ENCODE measurements at regions of chr19 and their contacts with region 1.

Region 1: DNA sequence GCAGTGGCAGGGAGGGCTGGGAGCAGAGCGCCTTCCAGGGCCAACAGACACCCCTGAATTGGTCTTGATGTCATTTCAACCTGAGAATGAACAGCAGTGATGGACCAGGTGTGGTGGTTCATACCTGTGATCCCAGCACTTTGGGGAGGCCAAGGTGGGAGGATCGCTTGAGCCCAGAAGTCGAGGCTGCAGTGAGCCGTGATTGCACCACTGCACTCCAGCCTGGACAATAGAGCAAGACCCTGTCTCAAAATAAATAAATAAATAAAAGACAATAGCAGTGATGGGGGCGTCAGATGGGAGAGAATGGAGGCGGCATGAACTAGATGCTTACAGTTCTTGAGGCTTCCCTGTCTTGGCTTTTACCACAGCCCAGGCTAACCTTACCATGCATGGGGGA is 46.1 kb upstream of the ONECUT3 start:
- DNase-seq: no peak
- H3K4me3 ChIP-seq: no peak overlapping the region
- H3K27ac ChIP-seq: no peak overlapping the region
- H3K4me1 ChIP-seq: peaks cover 3% of the 10 kb centered on the region
- H3K27me3 ChIP-seq: no peaks in the 10 kb centered on the region
- CTCF ChIP-seq: no peak

Region 2: DNA sequence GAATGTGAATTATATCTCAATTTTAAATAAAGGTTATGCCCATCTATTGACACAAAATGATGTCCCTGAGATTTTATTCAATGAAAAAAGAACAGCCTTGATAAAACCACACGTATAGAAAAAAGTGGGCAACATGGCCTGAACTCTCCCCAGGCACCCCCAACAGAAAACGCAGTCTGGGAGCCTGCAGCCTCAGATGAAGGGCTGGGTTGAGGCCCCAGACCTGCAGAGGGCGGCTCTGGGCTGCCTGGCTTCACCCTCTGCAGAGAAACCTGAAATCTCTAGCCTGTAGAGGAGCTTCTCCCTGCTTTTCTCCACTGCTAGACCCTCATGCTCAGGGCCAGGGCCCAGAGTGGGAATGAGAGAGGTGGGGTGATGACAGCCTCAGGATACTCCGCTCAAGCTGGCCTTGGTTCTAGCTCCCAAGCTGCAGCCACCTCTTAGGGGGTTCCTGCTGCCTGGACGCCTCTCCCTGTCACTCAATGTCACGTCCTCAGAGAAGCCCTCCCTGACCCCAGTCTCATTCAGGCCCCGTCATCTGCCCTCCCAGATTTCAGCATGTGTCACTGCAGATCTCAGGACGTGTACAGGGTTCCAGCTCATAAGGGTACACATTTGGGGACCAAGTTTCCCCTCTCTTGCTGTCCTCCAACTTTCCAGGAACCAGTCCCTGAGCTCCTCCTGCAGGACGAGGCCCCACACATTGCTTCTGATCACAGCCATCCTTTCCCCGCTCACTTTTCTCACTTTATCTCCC is 116.4 kb before region 1 on chr19:
- CTCF ChIA-PET with region 1: no interaction called
- dilution Hi-C with region 1: no loop called
- in situ Hi-C with region 1: no loop called
- intact Hi-C with region 1: no loop called
- DNase-seq: no peak
- H3K4me3 ChIP-seq: peak overlapping the region; percentile 77 to 96 (median 85)
- H3K27ac ChIP-seq: peak overlapping the region; percentile 82
- H3K4me1 ChIP-seq: peaks cover 35% of the 10 kb centered on the region
- H3K27me3 ChIP-seq: no peaks in the 10 kb centered on the region
- CTCF ChIP-seq: peak in 1 of 2 donors; percentile 59

Region 3: DNA sequence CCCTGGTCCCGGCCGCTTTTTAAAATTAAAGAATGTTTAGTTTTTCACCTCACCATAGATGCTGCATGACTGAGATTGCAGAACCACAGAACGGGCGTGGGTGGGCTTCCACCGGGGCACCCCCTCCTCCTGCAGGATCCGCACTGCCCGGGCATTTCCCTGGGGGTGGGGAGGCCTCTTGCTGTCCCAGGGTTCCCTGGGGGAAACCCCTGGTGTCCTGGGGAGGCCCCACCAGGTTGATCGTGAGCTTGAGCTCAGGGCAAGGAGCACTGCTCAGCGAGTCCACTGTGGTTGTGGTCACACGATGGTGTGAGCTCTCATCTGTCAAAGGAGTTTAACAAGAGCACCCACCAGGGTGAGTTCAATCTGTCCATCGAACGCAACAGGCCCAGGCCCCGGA is 43.4 kb before region 1 on chr19:
- CTCF ChIA-PET with region 1: no interaction called
- dilution Hi-C with region 1: loop called (anchors 5 kb)
- in situ Hi-C with region 1: no loop called
- intact Hi-C with region 1: no loop called
- DNase-seq: no peak
- H3K4me3 ChIP-seq: no peak overlapping the region
- H3K27ac ChIP-seq: no peak overlapping the region
- H3K4me1 ChIP-seq: peaks cover 3% of the 10 kb centered on the region
- H3K27me3 ChIP-seq: peaks cover 6% of the 10 kb centered on the region
- CTCF ChIP-seq: no peak